ENCODE measurements at regions of chr1 and their contacts with region 1.

Region 1: GRCh38 chr1:115764541-115764940 is 4.0 kb downstream of the CASQ2 start:
- DNase-seq: peak; percentile 7 to 24
- ATAC-seq: peak; percentile 47 to 54; a peak in 4 of 6 replicates
- H3K4me3 ChIP-seq: no peak overlapping the region
- H3K27ac ChIP-seq: no peak overlapping the region
- H3K4me1 ChIP-seq: no peaks in the 10 kb centered on the region
- CTCF ChIP-seq: peak; percentile 41
- EP300 ChIP-seq: no peak
- POLR2A ChIP-seq: no peak
- RAD21 ChIP-seq: peak; percentile 53 to 57

Region 2: GRCh38 chr1:115642168-115643072 is 122.1 kb before region 1 on chr1:
- CTCF ChIA-PET with region 1: interaction called, 10 read pairs
- POLR2A ChIA-PET with region 1: no interaction called
- DNase-seq: peak; percentile 32 to 48
- ATAC-seq: peak; percentile 75 to 82
- H3K4me3 ChIP-seq: peak overlapping the region; percentile 96
- H3K27ac ChIP-seq: peak overlapping the region; percentile 90 to 96
- H3K4me1 ChIP-seq: peaks cover 19% of the 10 kb centered on the region
- CTCF ChIP-seq: 0 out of 3 replicates have a peak, but pooled peaks have one; percentile 11
- EP300 ChIP-seq: no peak
- POLR2A ChIP-seq: no peak
- RAD21 ChIP-seq: peak in 1 of 2 experiments; percentile 24; a peak in 1 of 5 replicates